A673 (cell line): ENCODE measurements at regions of chr1 and their contacts with region 1.

Region 1: DNA sequence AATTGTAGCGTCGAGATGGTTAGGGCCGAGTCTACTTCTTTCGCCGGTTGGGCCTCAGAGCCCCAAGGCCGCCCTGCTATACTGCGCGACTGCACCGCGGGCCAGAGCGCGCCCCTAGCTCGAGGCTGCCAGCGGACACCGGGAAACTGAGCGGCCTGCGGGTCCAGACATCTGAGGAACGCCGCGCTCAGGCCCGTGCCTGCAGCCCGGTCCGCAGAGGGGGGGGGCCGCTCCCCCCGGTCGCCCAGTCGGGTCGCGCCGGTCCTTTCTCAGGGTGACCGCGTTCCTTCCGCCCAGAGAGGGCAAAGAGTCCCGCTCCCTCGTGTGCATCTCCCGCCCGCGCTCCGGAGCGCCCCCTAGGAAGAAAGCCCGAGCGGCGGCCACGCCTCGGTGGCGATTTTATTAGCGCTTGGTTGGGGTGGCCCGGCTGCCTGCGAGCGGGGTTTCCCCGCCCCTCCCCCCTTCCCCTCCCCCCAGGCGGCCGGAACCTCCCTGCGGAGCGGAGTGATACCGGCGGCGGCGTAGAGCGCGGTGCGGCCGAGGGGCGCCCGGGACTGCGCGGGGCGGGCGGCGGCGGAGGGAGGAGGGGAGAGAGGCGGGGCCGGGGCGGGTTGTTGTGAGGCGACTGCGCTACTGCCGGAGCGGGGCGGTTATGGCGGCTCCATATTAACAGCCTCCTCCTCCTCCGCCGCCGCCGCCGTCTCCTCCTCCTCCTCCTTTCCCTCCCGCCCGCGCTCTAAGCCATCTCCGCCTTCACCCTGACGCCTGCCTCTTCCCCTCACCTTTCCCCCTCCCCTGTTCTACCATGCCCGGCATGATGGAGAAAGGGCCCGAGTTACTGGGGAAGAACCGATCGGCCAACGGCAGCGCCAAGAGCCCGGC is at the start of gene RCOR3:
- DNase-seq: peak; percentile 95
- H3K4me3 ChIP-seq: peak within 1 kb of the TSS; percentile 98
- H3K27ac ChIP-seq: peak within 1 kb of the TSS; percentile 96
- H3K4me1 ChIP-seq: peaks cover 17% of the 10 kb centered on the region
- H3K27me3 ChIP-seq: no peaks in the 10 kb centered on the region
- CTCF ChIP-seq: peak; percentile 63
- total RNA-seq, gene RCOR3: 39.0 and 39.6 TPM in 2 replicates

Region 2: DNA sequence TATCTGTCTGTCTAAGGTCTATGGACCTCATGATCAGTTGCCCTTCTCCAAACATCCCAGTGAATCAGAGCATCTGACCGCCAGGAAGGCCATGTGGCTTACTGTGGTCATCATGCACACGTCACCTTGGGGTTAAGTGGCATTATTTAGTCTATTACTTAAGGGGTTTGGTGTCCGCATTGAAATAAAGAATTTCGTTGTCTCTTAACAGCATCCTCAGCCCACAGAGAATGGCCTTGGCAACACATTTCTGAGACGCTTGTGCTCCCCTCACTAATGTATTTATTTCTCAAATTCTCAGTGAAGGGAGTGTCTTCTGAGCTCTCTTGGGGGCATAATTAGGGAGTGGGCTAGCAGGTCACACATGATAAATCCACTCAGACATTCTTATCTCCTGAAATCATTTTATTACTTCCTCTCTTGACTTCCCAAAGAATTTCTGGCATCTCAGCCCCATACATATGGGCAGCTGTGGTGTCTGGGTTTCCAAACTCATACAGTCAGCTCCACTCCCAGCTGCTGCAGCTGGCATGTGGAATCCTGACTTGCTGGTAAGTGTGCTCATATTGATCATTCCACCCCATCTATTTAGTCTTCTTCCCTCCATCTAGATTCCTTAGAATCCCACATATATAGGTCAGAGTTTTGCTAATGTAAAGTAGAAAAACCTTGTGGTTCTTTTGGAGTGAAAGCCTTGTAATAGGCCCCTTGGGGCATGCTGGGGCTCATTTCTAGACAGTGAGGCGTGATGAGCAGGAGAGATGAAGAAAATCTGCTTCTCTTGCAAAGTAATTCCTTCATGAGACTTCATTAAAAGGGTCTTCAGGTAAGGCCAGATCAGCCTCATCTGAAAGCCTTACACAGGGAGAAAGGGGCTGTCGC is 819.8 kb before region 1 on chr1:
- CTCF ChIA-PET with region 1: no interaction called
- POLR2A ChIA-PET with region 1: no interaction called
- intact Hi-C with region 1: loop called (anchors 10 kb)
- DNase-seq: peak; percentile 93
- H3K4me3 ChIP-seq: no peak overlapping the region
- H3K27ac ChIP-seq: peak overlapping the region; percentile 77
- H3K4me1 ChIP-seq: peaks cover 16% of the 10 kb centered on the region
- H3K27me3 ChIP-seq: no peaks in the 10 kb centered on the region
- CTCF ChIP-seq: no peak

Region 3: GRCh38 chr1:210726621-210727020 is 532.4 kb before region 1 on chr1:
- CTCF ChIA-PET with region 1: no interaction called
- POLR2A ChIA-PET with region 1: no interaction called
- intact Hi-C with region 1: no loop called
- DNase-seq: peak; percentile 56
- H3K4me3 ChIP-seq: no peak overlapping the region
- H3K27ac ChIP-seq: no peak overlapping the region
- H3K4me1 ChIP-seq: no peaks in the 10 kb centered on the region
- H3K27me3 ChIP-seq: peaks cover 27% of the 10 kb centered on the region
- CTCF ChIP-seq: no peak

Region 4: GRCh38 chr1:211237579-211237978 is 21.4 kb before region 1 on chr1:
- CTCF ChIA-PET with region 1: no interaction called
- POLR2A ChIA-PET with region 1: no interaction called
- intact Hi-C with region 1: no loop called
- DNase-seq: no peak
- H3K4me3 ChIP-seq: no peak overlapping the region
- H3K27ac ChIP-seq: no peak overlapping the region
- H3K4me1 ChIP-seq: no peaks in the 10 kb centered on the region
- H3K27me3 ChIP-seq: no peaks in the 10 kb centered on the region
- CTCF ChIP-seq: no peak

Region 5: DNA sequence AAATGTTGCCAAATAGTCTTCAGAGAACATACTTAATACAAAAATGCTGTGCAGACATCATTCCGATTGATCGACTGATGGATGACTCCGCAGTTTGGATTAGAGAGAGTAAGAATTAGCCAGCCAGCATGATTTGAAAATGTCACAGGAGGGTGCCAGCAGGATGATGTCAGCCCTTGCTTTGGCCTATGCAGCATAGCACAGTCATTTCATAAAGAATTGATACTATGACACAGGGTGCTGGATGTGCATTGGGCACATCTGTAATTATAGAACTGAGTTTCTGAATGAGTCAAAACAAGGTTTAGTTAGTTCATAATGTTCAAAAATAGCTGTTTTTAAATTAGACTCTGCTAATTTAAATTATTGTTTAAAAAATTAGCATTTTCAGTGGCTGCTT is 46.0 kb after region 1 on chr1:
- CTCF ChIA-PET with region 1: no interaction called
- POLR2A ChIA-PET with region 1: no interaction called
- intact Hi-C with region 1: loop called (anchors 1 kb)
- DNase-seq: peak; percentile 71
- H3K4me3 ChIP-seq: no peak overlapping the region
- H3K27ac ChIP-seq: no peak overlapping the region
- H3K4me1 ChIP-seq: peaks cover 9% of the 10 kb centered on the region
- H3K27me3 ChIP-seq: no peaks in the 10 kb centered on the region
- CTCF ChIP-seq: no peak